Heart right ventricle (tissue), 16 donors: ENCODE measurements at regions of chr9 and their contacts with region 1.

Region 1: GRCh38 chr9:81292056-81292735 is 397.2 kb downstream of the TLE1 start:
- DNase-seq: no peak
- ATAC-seq: no peak
- H3K4me3 ChIP-seq: no peak overlapping the region
- H3K27ac ChIP-seq: no peak overlapping the region
- H3K4me1 ChIP-seq: peaks cover 0 to 4% (median 0%) of the 10 kb centered on the region in 9 donors
- H3K27me3 ChIP-seq: no peaks in the 10 kb centered on the region
- CTCF ChIP-seq: no peak

Region 2: GRCh38 chr9:83070261-83070660 is 1778.1 kb after region 1 on chr9:
- intact Hi-C with region 1: loop called in 1 of 10 experiments (anchors 5 kb)
- DNase-seq: no peak
- ATAC-seq: no peak
- H3K4me3 ChIP-seq: no peak overlapping the region
- H3K27ac ChIP-seq: no peak overlapping the region
- H3K4me1 ChIP-seq: no peaks in the 10 kb centered on the region
- H3K27me3 ChIP-seq: peaks cover 0 to 22% (median 6%) of the 10 kb centered on the region in 7 donors
- CTCF ChIP-seq: no peak